ENCODE measurements at regions of chr22 and their contacts with region 1.

Region 1: GRCh38 chr22:38353142-38353629 is 36.0 kb upstream of the CSNK1E start:
- DNase-seq: peak; percentile 44 to 81
- H3K4me3 ChIP-seq: no peak overlapping the region
- H3K27ac ChIP-seq: no peak overlapping the region
- H3K4me1 ChIP-seq: peaks cover 0 to 7% (median 3%) of the 10 kb centered on the region in 4 donors
- H3K27me3 ChIP-seq: peaks cover 0 to 21% of the 10 kb centered on the region in 2 donors
- CTCF ChIP-seq: peak; percentile 98 to 99

Region 2: GRCh38 chr22:38051900-38052862 is 301.0 kb before region 1 on chr22:
- intact Hi-C with region 1: loop called (anchors 5 kb)
- DNase-seq: peak; percentile 69 to 83
- H3K4me3 ChIP-seq: no peak overlapping the region
- H3K27ac ChIP-seq: no peak overlapping the region
- H3K4me1 ChIP-seq: peaks cover 0 to 17% (median 9%) of the 10 kb centered on the region in 4 donors
- H3K27me3 ChIP-seq: peaks cover 0 to 20% of the 10 kb centered on the region in 2 donors
- CTCF ChIP-seq: peak; percentile 78 to 90

Region 3: DNA sequence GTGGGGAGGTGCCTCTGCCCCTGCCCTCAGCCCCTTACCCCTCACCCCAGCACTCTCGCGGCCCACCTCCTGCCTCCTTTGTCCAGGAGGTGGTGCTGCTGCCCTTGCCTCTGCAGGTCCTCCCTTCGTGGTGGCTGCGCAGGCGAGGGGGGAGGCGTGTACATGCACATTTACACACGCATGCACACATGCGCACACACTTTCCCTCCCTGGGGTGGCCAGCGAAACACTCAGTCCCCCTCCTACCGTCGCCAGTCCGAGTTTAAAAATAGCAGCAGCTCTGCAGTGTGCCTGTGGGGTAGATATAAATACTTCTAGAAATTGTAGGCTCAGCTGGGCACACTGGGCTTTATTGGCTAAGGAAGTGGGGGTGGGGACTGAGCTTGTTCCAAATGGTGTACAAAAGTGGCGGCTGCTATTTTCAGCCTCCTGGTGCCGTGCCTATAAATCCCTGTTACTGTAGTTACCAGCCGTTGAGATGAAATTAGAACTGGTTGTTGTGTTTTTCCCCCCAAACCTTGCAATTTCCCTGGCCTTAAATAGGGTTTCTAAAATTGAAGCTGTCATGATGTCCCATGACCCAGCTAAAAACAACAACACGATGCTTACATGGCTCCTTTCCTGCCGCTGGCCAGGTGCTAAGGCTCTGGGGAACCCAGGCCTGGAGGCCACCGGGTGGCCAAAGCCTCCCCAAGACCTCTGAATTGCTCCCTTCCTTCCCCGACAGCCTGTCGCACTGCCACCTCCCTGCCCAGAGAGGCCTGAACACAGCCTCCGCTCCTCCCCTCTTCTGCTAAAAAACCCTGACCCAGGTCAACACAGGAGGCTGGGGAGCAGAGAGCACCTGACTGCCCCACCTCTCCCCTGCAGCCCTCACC is 283.6 kb before region 1 on chr22:
- intact Hi-C with region 1: loop called (anchors 5 kb)
- DNase-seq: peak; percentile 87 to 98
- H3K4me3 ChIP-seq: peak overlapping the region in 1 of 2 donors; percentile 24
- H3K27ac ChIP-seq: peak overlapping the region; percentile 91 to 97
- H3K4me1 ChIP-seq: peaks cover 15 to 58% (median 36%) of the 10 kb centered on the region in 4 donors
- H3K27me3 ChIP-seq: no peaks in the 10 kb centered on the region
- CTCF ChIP-seq: peak; percentile 74 to 79

Region 4: DNA sequence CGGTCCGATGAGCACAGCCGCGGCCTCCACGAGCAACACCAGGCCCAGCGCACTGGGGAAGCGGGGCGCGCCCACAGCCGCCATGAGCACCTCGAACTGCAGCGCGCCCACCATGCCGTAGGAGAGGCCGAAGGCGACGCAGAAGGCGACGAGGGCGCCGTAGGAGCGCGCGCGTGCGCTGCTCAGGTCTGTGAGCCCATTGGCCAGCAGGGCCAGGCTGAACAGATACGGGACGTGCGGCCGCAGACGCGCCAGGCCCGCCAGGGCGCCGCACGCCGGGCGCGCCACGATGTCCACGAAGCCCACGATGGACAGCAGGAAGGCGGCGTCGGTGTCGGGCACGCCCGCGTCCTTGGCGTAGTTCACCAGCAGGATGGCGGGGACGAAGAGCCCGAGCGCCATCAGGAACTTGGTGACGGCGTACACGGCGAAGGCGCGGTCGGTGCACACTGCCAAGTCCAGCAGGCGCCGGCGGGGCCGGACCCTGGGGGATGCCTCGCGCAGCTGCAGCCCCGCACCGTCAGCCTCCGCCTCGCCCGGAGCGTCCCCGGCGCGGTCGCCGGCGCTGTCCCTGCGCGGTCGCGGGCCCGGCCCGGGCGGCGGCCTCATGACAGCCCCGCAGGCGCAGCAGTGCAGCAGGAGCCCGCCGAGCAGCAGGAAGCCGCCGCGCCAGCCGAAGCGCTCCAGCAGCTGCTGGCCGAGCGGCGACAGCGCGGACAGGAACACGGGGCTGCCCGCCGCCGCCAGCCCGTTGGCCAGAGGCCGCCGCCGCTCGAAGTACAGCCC is 272.1 kb before region 1 on chr22:
- intact Hi-C with region 1: no loop called
- DNase-seq: no peak
- H3K4me3 ChIP-seq: peak overlapping the region; percentile 45 to 49
- H3K27ac ChIP-seq: peak overlapping the region; percentile 10 to 59
- H3K4me1 ChIP-seq: peaks cover 0 to 28% (median 22%) of the 10 kb centered on the region in 4 donors
- H3K27me3 ChIP-seq: peaks cover 0 to 12% of the 10 kb centered on the region in 2 donors
- CTCF ChIP-seq: peak in 1 of 2 experiments; percentile 4

Region 5: DNA sequence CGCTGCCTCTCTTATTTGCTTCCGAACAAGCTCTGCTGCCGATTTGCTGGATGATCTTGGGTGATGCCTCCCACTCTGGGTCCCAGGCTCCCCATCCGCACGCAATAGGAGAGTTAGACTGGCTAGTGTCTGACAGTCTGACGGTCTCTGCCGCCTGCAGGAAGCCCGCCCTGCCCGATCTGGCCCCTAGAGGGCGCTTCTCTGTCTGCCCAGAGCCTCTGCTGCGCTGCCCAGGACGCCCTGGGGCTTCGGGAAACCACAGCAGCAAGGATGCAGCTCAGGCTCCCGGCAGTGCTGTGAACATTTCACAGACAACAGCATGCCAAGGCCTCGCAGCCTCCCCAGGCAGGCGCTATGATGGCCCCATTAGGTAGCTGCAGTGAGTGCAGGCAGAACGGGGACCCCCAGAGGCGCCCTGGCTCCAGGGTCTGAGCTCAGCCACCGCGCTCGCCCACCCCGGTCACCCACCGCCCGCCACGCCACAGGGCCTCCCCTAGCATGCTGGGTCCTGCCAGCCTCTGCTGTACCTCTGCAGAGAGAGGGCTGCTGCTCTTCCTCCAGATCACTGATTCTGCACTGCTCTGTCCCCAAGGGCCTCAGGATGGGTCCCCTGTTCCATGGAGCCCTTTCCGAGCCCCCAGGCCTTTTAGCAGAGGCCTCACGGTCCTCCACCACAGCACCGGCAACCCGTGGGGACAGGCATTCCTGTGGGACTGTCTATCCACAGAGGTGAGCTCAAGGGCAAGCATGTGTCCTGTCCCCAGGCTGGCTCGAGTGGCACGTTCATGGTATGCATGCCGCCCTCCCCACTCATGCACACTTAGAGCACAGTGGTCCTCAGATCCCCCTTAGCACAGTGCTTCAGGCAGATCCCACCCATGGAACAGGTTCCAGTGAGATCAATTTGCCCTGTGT is 238.4 kb before region 1 on chr22:
- intact Hi-C with region 1: loop called (anchors 5 kb)
- DNase-seq: peak; percentile 84 to 88
- H3K4me3 ChIP-seq: no peak overlapping the region
- H3K27ac ChIP-seq: no peak overlapping the region
- H3K4me1 ChIP-seq: peaks cover 0 to 10% (median 4%) of the 10 kb centered on the region in 4 donors
- H3K27me3 ChIP-seq: no peaks in the 10 kb centered on the region
- CTCF ChIP-seq: peak; percentile 88 to 94

Region 6: DNA sequence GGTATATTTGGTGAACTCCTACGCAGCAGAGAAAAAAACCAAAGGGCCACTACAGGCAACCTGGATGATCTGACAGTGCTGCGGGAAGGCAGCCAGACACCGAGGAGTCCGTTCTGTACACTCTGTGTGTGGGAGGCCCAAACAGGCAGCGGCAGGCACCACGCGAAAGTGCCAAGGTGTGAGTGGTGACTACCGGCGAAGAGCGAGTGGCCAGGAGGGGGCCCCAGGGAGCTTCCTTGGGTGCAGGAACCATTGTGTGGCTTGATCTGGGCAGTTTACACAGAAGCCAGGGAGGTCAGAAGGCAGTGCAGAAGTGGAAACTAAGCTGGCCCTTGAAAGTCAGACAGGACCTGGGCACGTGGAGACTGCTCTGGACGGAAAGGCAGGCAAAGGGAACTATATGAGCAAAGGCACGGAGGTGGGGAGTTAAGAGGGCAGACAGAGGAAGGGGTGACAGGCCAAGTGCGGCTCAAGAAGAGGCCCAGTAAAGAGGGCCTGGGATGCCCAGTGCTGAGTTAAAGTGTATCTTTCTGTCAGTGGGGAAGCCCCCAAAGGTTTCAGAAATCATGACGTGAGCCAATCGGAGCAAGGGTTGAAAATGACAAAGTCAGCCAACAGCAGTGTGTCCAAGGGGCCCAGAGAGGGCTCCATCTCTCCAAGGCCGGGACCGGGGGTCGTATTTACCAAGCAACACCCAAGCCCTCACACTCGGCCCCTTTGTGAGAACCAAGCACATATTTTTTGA is 91.0 kb before region 1 on chr22:
- intact Hi-C with region 1: loop called (anchors 5 kb)
- DNase-seq: peak in 1 of 2 donors; percentile 81
- H3K4me3 ChIP-seq: no peak overlapping the region
- H3K27ac ChIP-seq: peak overlapping the region; percentile 28 to 75
- H3K4me1 ChIP-seq: peaks cover 0 to 83% (median 51%) of the 10 kb centered on the region in 4 donors
- H3K27me3 ChIP-seq: no peaks in the 10 kb centered on the region
- CTCF ChIP-seq: peak; percentile 55 to 57

Region 7: GRCh38 chr22:38335077-38335476 is 18.1 kb before region 1 on chr22:
- intact Hi-C with region 1: no loop called
- DNase-seq: no peak
- H3K4me3 ChIP-seq: no peak overlapping the region
- H3K27ac ChIP-seq: no peak overlapping the region
- H3K4me1 ChIP-seq: peaks cover 0 to 9% (median 8%) of the 10 kb centered on the region in 4 donors
- H3K27me3 ChIP-seq: peaks cover 0 to 22% of the 10 kb centered on the region in 2 donors
- CTCF ChIP-seq: no peak